ENCODE measurements at regions of chr9 and their contacts with region 1.

Region 1: DNA sequence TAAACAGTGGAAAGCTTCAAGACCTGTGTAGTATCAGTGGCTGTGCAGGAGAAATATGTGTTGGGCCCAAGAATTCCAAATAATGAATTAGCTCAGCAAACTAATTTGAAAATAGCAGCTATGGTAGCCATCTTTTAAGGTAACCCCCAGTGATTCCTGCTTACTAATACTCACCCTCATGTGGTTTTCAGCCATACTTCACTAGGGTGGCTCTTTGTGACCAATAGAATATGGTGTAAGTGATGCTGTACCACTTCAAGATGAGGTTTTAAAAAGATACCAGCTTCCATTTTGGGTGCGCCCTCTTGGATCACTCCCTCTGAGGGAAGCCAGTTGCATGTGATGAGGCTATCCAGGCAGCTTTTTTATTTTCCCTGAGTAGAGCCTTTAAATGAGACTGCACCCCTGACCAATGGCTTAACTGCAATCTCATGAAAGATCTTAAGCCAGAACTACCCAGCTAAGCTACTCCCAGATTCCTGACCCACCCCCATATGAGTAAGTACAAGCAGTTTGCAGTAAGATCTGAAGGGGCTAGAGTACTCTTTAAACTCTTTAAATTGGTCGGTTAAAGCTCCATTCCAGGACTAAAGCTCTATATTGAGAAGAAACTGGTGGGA is 58.3 kb downstream of the UHRF2 start:
- DNase-seq: no peak
- ATAC-seq: no peak
- H3K4me3 ChIP-seq: no peak overlapping the region
- H3K27ac ChIP-seq: no peak overlapping the region
- H3K4me1 ChIP-seq: no peaks in the 10 kb centered on the region
- H3K27me3 ChIP-seq: no peaks in the 10 kb centered on the region
- CTCF ChIP-seq: no peak
- POLR2A ChIP-seq: no peak
- RAD21 ChIP-seq: no peak

Region 2: DNA sequence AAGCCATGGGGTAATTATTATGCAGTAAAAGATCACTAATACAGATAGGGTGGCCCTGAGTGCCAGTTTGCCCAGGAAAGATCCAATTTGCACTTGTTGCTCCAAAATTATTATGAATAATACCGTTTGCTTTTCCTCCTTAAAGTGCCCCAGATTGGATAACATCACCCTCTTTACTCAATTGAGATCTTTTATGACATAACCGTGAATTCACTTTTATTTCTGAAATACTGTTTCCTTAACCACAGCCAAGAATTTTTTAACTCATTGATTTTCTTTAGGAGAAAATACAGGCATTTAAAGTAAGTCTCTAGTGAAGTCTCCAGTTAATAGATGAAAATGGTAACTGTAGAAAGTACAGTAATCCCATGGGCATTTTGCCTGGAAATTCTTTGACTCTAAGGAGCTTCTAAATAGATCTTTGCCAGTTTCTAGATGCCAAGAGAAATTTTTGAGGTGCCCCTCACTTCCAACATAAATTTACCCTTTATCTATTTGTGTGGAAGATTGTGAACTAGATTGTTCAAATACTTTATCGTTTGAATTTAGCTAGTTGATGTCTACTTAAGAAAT is 40.8 kb after region 1 on chr9:
- CTCF ChIA-PET with region 1: no interaction called
- POLR2A ChIA-PET with region 1: no interaction called
- dilution Hi-C with region 1: no loop called
- in situ Hi-C with region 1: no loop called
- intact Hi-C with region 1: loop called (anchors 5 kb)
- DNase-seq: peak; percentile 36
- ATAC-seq: peak; percentile 63; the same call in 1 of the 2 replicates
- H3K4me3 ChIP-seq: no peak overlapping the region
- H3K27ac ChIP-seq: no peak overlapping the region
- H3K4me1 ChIP-seq: no peaks in the 10 kb centered on the region
- H3K27me3 ChIP-seq: no peaks in the 10 kb centered on the region
- CTCF ChIP-seq: no peak
- POLR2A ChIP-seq: no peak
- RAD21 ChIP-seq: no peak

Measured in IMR-90 (cell line).